Activated CD8-positive, alpha-beta T cell treated with anti-CD3 and anti-CD28 coated beads, Interleukin-2, amount 10 ng/mL, durations not matched to agents 7 days and 5 days (primary cell): ENCODE measurements at regions of chr19 and their contacts with region 1.

Region 1: GRCh38 chr19:48513289-48514122 is 1.9 kb upstream of the LMTK3 start:
- DNase-seq: peak; percentile 86
- ATAC-seq: peak; percentile 78
- H3K4me3 Mint-ChIP-seq: no peak overlapping the region
- H3K27ac Mint-ChIP-seq: no peak overlapping the region
- H3K4me1 Mint-ChIP-seq: peaks cover 18% of the 10 kb centered on the region
- H3K27me3 Mint-ChIP-seq: no peaks in the 10 kb centered on the region

Region 2: GRCh38 chr19:48483301-48483700 is 30.2 kb before region 1 on chr19:
- CTCF ChIA-PET with region 1: no interaction called
- POLR2A ChIA-PET with region 1: no interaction called
- DNase-seq: no peak
- ATAC-seq: no peak
- H3K4me3 Mint-ChIP-seq: no peak overlapping the region
- H3K27ac Mint-ChIP-seq: no peak overlapping the region
- H3K4me1 Mint-ChIP-seq: peaks cover 31% of the 10 kb centered on the region
- H3K27me3 Mint-ChIP-seq: no peaks in the 10 kb centered on the region

Region 3: DNA sequence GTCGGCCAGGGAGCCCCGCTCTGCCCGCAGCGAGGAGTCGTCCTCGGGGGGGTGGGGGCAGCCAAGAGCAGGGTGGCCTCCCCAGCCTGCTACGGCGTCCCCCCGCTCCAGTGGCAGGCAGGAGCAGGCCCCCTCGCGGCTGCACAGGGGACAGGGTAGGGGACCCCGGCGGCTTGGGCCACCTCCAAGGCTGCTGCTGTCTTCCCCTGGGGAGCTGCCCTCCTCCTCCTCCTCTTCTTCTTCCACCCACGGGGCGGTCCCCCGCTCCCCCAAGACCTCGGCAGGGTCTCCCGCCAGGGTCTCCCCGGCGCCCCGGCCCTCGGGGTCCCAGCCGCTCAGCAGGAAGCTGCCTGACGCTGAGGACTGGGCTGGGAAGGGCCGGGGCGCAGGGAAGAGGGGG is 14.6 kb before region 1 on chr19:
- CTCF ChIA-PET with region 1: no interaction called
- POLR2A ChIA-PET with region 1: no interaction called
- DNase-seq: no peak
- ATAC-seq: no peak
- H3K4me3 Mint-ChIP-seq: no peak overlapping the region
- H3K27ac Mint-ChIP-seq: no peak overlapping the region
- H3K4me1 Mint-ChIP-seq: peaks cover 40% of the 10 kb centered on the region
- H3K27me3 Mint-ChIP-seq: peaks cover 10% of the 10 kb centered on the region

Region 4: GRCh38 chr19:48582168-48582567 is 68.7 kb after region 1 on chr19:
- CTCF ChIA-PET with region 1: interaction called, 166 read pairs
- POLR2A ChIA-PET with region 1: no interaction called
- DNase-seq: no peak
- ATAC-seq: no peak
- H3K4me3 Mint-ChIP-seq: no peak overlapping the region
- H3K27ac Mint-ChIP-seq: no peak overlapping the region
- H3K4me1 Mint-ChIP-seq: peaks cover 6% of the 10 kb centered on the region
- H3K27me3 Mint-ChIP-seq: no peaks in the 10 kb centered on the region